Astrocyte of the cerebellum (primary cell): ENCODE measurements at regions of chr9 and their contacts with region 1.

Region 1: GRCh38 chr9:131960871-131961495 is 118.7 kb downstream of the MED27 start:
- DNase-seq: no peak
- H3K4me3 ChIP-seq: no peak overlapping the region
- CTCF ChIP-seq: no peak

Region 2: DNA sequence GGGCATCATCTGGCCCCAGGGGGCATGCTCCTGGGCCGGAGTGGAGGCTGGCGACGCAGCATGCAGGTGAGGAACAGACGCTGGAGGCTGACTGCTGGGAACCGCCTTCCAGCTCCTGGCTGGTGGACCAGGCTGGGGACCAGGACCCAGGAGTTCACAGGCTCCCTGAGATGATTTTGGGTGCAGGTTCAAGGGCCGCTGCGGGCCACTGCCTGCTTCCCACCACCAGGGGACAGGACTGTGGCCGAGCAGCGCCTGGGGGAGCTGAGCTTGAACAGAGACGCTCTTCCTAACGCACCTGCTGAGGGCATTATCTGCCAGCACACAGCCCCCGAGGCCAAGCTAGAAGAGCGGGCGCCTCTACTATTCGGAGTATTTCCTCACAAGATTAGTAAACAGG is 89.0 kb before region 1 on chr9:
- in situ Hi-C with region 1: loop called (anchors 10 kb)
- DNase-seq: no peak
- H3K4me3 ChIP-seq: no peak overlapping the region
- CTCF ChIP-seq: peak; percentile 32